CD8-positive, alpha-beta memory T cell (primary cell): ENCODE measurements at regions of chr2 and their contacts with region 1.

Region 1: DNA sequence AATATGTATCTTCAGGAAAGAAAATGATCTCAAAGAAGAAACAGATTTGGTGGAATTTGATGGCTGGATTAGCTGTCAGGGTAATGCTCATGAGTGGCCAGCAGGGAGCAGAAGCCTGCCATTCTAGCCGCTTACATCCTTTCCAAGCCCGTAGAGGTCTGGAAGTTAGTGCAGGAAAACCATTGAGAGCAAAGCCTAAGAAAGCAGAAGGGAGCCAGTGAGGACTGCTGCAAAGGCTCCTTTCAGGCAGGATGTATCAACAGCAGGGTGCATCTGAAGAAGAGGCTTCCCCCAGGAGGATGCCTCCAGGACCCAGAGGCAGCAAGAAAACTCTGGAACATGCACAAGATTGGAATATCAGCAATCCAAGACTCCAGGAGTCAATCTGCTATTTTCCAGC is 22.9 kb upstream of the LBH start:
- DNase-seq: peak in 3 of 5 donors; percentile 19 to 42 (median 38)
- H3K4me3 ChIP-seq: peak overlapping the region; percentile 13
- H3K4me3 Mint-ChIP-seq: peak overlapping the region in 5 of 7 donors; percentile 24 to 74 (median 59)
- H3K27ac ChIP-seq: no peak overlapping the region
- H3K27ac Mint-ChIP-seq: peak overlapping the region; percentile 20 to 93 (median 62)
- H3K4me1 ChIP-seq: peaks cover 26% of the 10 kb centered on the region
- H3K4me1 Mint-ChIP-seq: peaks cover 18 to 22% (median 19%) of the 10 kb centered on the region in 3 donors
- H3K27me3 ChIP-seq: no peaks in the 10 kb centered on the region
- H3K27me3 Mint-ChIP-seq: no peaks in the 10 kb centered on the region

Region 2: GRCh38 chr2:30115141-30115980 is 93.1 kb before region 1 on chr2:
- CTCF ChIA-PET with region 1: no interaction called
- POLR2A ChIA-PET with region 1: no interaction called
- DNase-seq: peak; percentile 31 to 67 (median 38)
- H3K4me3 ChIP-seq: no peak overlapping the region
- H3K4me3 Mint-ChIP-seq: peak overlapping the region in 1 of 7 donors; percentile 1
- H3K27ac ChIP-seq: no peak overlapping the region
- H3K27ac Mint-ChIP-seq: peak overlapping the region in 5 of 8 donors; percentile 7 to 64 (median 18)
- H3K4me1 ChIP-seq: no peaks in the 10 kb centered on the region
- H3K4me1 Mint-ChIP-seq: peaks cover 4 to 5% (median 4%) of the 10 kb centered on the region in 3 donors
- H3K27me3 ChIP-seq: no peaks in the 10 kb centered on the region
- H3K27me3 Mint-ChIP-seq: peaks cover 7 to 21% of the 10 kb centered on the region in 2 donors

Region 3: GRCh38 chr2:30146438-30147147 is 61.9 kb before region 1 on chr2 and contains the start of gene YPEL5:
- CTCF ChIA-PET with region 1: interaction called, 15 read pairs
- POLR2A ChIA-PET with region 1: no interaction called
- DNase-seq: peak; percentile 99 to 100 (median 99)
- H3K4me3 ChIP-seq: peak within 1 kb of the TSS; percentile 71
- H3K4me3 Mint-ChIP-seq: peak within 1 kb of the TSS; percentile 86 to 94 (median 90)
- H3K27ac ChIP-seq: peak within 1 kb of the TSS; percentile 100
- H3K27ac Mint-ChIP-seq: peak within 1 kb of the TSS; percentile 98 to 100 (median 99)
- H3K4me1 ChIP-seq: peaks cover 51% of the 10 kb centered on the region
- H3K4me1 Mint-ChIP-seq: peaks cover 45 to 57% (median 50%) of the 10 kb centered on the region in 3 donors
- H3K27me3 ChIP-seq: no peaks in the 10 kb centered on the region
- H3K27me3 Mint-ChIP-seq: peaks cover 0 to 7% of the 10 kb centered on the region in 2 donors
- total RNA-seq, gene YPEL5: 35.7 to 38.3 TPM

Region 4: GRCh38 chr2:30177956-30178355 is 30.5 kb before region 1 on chr2:
- CTCF ChIA-PET with region 1: no interaction called
- POLR2A ChIA-PET with region 1: no interaction called
- DNase-seq: no peak
- H3K4me3 ChIP-seq: no peak overlapping the region
- H3K4me3 Mint-ChIP-seq: no peak overlapping the region
- H3K27ac ChIP-seq: no peak overlapping the region
- H3K27ac Mint-ChIP-seq: no peak overlapping the region
- H3K4me1 ChIP-seq: no peaks in the 10 kb centered on the region
- H3K4me1 Mint-ChIP-seq: no peaks in the 10 kb centered on the region
- H3K27me3 ChIP-seq: no peaks in the 10 kb centered on the region
- H3K27me3 Mint-ChIP-seq: peaks cover 3 to 5% of the 10 kb centered on the region in 2 donors

Region 5: GRCh38 chr2:30245364-30245763 is 36.9 kb after region 1 on chr2:
- CTCF ChIA-PET with region 1: interaction called, 285 read pairs
- POLR2A ChIA-PET with region 1: no interaction called
- DNase-seq: no peak
- H3K4me3 ChIP-seq: no peak overlapping the region
- H3K4me3 Mint-ChIP-seq: peak overlapping the region in 5 of 7 donors; percentile 8 to 61 (median 22)
- H3K27ac ChIP-seq: no peak overlapping the region
- H3K27ac Mint-ChIP-seq: peak overlapping the region; percentile 59 to 89 (median 70)
- H3K4me1 ChIP-seq: peaks cover 78% of the 10 kb centered on the region
- H3K4me1 Mint-ChIP-seq: peaks cover 82 to 97% (median 94%) of the 10 kb centered on the region in 3 donors
- H3K27me3 ChIP-seq: no peaks in the 10 kb centered on the region
- H3K27me3 Mint-ChIP-seq: no peaks in the 10 kb centered on the region

Region 6: GRCh38 chr2:30336978-30337841 is 128.8 kb after region 1 on chr2:
- CTCF ChIA-PET with region 1: interaction called, 21 read pairs
- POLR2A ChIA-PET with region 1: no interaction called
- DNase-seq: peak in 4 of 5 donors; percentile 24 to 70 (median 58)
- H3K4me3 ChIP-seq: peak overlapping the region; percentile 40
- H3K4me3 Mint-ChIP-seq: peak overlapping the region; percentile 44 to 91 (median 85)
- H3K27ac ChIP-seq: peak overlapping the region; percentile 55
- H3K27ac Mint-ChIP-seq: peak overlapping the region; percentile 92 to 100 (median 97)
- H3K4me1 ChIP-seq: peaks cover 67% of the 10 kb centered on the region
- H3K4me1 Mint-ChIP-seq: peaks cover 66 to 75% (median 70%) of the 10 kb centered on the region in 3 donors
- H3K27me3 ChIP-seq: no peaks in the 10 kb centered on the region
- H3K27me3 Mint-ChIP-seq: no peaks in the 10 kb centered on the region

Region 7: DNA sequence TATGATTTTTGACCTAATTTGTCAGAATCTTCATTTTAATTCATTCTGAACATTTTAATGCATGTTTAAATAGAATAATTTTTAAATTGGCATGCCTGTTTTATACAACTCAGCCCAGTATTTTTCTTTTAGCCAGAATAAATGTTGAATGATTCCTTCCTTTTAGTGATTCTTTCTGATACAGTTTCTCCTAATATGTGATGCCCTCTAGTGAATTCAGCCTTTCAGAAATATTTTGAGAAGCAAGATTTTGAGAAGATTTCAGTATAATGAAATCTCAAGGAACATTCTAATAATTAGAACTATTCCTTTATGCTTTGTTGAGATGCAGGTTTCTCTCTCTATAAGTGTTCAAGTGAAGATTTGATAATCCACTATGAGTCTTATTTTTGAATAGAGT is 267.1 kb after region 1 on chr2:
- CTCF ChIA-PET with region 1: interaction called, 13 read pairs
- POLR2A ChIA-PET with region 1: no interaction called
- DNase-seq: no peak
- H3K4me3 ChIP-seq: no peak overlapping the region
- H3K4me3 Mint-ChIP-seq: no peak overlapping the region
- H3K27ac ChIP-seq: no peak overlapping the region
- H3K27ac Mint-ChIP-seq: peak overlapping the region in 1 of 8 donors; percentile 5
- H3K4me1 ChIP-seq: no peaks in the 10 kb centered on the region
- H3K4me1 Mint-ChIP-seq: peaks cover 13 to 17% (median 16%) of the 10 kb centered on the region in 3 donors
- H3K27me3 ChIP-seq: no peaks in the 10 kb centered on the region
- H3K27me3 Mint-ChIP-seq: no peaks in the 10 kb centered on the region